MCF 10A (cell line): ENCODE measurements at regions of chr9 and their contacts with region 1.

Region 1: DNA sequence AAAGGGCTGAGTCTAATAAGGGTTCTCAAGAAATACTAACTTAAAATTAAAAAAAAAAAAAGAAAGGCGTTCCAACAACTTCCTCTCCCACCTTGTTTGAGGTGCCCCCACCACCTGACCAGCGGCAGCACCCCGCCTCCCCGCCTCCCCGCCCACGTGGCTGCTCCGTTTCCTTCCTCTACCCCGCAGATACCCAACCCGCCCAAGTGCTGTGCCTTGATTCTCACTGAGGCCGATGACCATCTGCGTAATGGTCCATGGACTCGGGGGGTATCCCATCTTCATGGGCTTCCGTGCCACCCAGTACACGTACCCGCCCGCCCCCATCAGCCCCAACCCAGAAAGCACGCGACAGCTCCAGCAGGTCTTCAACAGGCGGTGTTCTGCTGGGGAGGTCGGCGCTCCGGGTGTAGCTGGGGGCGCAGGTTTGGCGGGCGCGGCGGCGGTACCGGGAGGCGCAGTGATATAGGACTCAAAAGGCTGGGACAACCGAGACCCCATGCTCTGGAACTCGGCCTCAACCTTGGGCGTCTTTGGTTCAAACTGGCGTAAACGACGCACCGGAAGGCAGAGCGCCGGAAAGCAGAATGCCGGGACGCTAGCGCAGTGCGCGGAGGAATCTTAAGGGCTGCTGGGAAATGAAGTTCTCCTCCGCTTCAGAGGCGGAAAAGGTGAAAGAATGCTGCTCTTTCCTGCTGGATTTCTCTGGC is at the start of gene DMAC1:
- DNase-seq: peak; percentile 87
- H3K4me3 Mint-ChIP-seq: peak within 1 kb of the TSS; percentile 91
- H3K27ac Mint-ChIP-seq: peak within 1 kb of the TSS; percentile 97
- H3K4me1 Mint-ChIP-seq: no peaks in the 10 kb centered on the region
- H3K27me3 Mint-ChIP-seq: no peaks in the 10 kb centered on the region
- CTCF ChIP-seq: no peak
- total RNA-seq, gene DMAC1: 48.3 and 49.6 TPM in 2 replicates

Region 2: DNA sequence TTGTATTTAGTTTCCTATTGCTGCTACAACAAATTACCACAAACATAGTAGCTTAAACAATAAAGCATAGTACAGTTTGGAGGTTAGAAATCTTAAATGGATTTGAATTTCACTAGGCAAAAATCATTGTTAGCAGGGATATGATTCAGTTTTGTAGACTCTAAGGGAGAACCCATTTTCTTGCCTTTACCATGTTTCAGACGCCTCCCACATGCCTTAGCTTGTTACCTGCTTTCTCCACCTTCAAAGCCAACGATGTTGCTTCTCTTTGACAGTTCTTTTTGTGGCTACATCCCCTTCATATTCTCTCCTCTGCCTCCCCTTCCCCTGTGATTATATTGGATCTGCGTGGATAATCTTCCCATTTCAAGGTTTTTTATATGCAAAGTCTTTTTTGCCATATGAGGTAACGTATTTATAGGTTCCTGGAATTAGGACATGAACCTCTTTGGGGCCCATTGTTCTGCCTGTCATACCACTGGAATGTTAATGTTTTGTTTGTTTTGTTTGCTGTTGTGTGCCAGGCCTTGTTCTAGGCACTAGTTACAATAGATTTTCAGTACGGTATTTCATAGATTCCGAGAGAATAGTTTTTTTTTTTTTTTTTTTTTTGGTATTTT is 1332.3 kb before region 1 on chr9:
- CTCF ChIA-PET with region 1: no interaction called
- POLR2A ChIA-PET with region 1: no interaction called
- intact Hi-C with region 1: no loop called
- DNase-seq: peak; percentile 31
- H3K4me3 Mint-ChIP-seq: no peak overlapping the region
- H3K27ac Mint-ChIP-seq: peak overlapping the region; percentile 69
- H3K4me1 Mint-ChIP-seq: peaks cover 20% of the 10 kb centered on the region
- H3K27me3 Mint-ChIP-seq: no peaks in the 10 kb centered on the region
- CTCF ChIP-seq: no peak

Region 3: GRCh38 chr9:7707934-7708333 is 91.5 kb before region 1 on chr9:
- CTCF ChIA-PET with region 1: no interaction called
- POLR2A ChIA-PET with region 1: no interaction called
- intact Hi-C with region 1: no loop called
- DNase-seq: peak; percentile 4
- H3K4me3 Mint-ChIP-seq: no peak overlapping the region
- H3K27ac Mint-ChIP-seq: no peak overlapping the region
- H3K4me1 Mint-ChIP-seq: no peaks in the 10 kb centered on the region
- H3K27me3 Mint-ChIP-seq: no peaks in the 10 kb centered on the region
- CTCF ChIP-seq: no peak

Region 4: DNA sequence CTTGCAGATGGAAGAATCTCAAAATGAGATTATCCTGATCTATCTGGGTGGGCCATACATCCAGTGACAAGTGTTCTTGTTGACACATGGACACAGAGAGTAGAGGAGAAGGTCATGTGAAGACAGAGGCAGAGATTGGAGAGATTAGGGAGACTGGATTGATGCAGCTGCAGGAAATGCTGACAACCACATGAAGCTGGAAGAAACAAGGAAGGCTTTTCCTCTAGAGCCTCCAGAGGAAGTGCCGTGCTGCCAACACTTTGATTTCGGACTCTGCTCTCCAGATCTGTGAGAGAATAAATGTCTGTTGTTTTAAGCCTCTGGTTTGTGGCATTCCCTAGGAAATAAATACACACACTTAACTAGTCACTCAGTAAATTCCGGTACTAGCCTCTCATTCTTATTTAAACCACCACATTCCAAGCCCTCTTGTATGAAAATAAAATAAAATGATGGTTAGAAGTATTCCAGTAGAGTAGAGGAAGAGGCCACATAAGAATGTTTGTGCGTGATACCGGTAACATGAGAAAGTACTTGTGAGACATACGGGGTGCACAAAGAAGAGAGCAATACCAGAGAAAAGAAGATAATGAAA is 111.1 kb after region 1 on chr9:
- CTCF ChIA-PET with region 1: no interaction called
- POLR2A ChIA-PET with region 1: no interaction called
- intact Hi-C with region 1: no loop called
- DNase-seq: no peak
- H3K4me3 Mint-ChIP-seq: no peak overlapping the region
- H3K27ac Mint-ChIP-seq: no peak overlapping the region
- H3K4me1 Mint-ChIP-seq: no peaks in the 10 kb centered on the region
- H3K27me3 Mint-ChIP-seq: no peaks in the 10 kb centered on the region
- CTCF ChIP-seq: no peak

Region 5: DNA sequence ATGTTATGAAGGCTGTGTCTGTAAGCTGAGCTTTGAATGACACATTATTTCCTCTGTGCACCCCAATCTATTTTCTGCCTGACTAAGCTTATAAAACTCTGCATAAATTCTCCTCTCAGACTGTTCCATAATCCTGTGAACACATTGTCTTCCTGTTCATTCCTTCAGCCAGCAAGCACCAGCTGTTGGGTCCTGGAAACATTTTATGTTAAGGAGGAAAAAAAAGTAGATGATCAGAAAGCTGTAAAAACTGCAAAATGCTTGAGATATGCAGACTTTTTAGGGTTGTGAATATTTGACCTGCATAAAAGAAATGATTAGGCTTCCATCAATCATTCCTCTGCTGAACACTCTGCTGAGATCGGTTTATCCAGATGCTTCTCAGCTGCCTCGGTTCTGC is 1246.2 kb after region 1 on chr9:
- CTCF ChIA-PET with region 1: no interaction called
- POLR2A ChIA-PET with region 1: interaction called, 10 read pairs
- intact Hi-C with region 1: no loop called
- DNase-seq: no peak
- H3K4me3 Mint-ChIP-seq: no peak overlapping the region
- H3K27ac Mint-ChIP-seq: no peak overlapping the region
- H3K4me1 Mint-ChIP-seq: no peaks in the 10 kb centered on the region
- H3K27me3 Mint-ChIP-seq: no peaks in the 10 kb centered on the region
- CTCF ChIP-seq: no peak